ENCODE measurements at regions of chr1 and their contacts with region 1.

Region 1: GRCh38 chr1:180178511-180179161 is 24.0 kb downstream of the QSOX1 start:
- DNase-seq: peak; percentile 68
- H3K4me3 ChIP-seq: no peak overlapping the region
- H3K27ac ChIP-seq: no peak overlapping the region
- H3K4me1 ChIP-seq: peaks cover 2 to 9% (median 6%) of the 10 kb centered on the region in 4 donors
- H3K27me3 ChIP-seq: no peaks in the 10 kb centered on the region
- CTCF ChIP-seq: peak; percentile 89 to 98 (median 96)
- EP300 ChIP-seq: no peak
- POLR2A ChIP-seq: no peak

Region 2: DNA sequence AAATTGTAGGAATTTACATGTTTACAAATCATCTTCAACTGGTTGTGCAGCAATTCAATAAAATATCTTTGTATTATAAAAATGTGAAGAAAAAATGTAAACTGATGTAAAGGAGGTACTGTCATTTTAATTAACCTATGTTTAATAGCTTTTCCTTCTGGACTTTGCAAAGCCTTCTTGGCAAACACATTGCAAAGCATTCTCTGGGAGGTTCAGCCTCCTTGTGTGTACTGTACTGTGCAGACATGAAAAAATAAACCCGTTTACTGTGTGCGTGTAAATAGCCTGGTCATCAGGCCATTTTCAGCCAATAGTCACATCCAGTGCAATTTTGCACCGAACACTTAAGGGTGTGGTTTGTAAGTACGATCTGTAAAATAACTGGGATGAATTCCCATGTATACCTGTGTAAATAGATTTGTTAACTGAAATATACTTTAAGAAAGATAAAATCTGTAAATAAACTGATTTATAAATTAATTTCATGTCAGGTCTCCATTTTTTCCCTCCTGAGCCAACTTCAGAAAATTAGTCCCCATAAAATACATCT is 64.2 kb before region 1 on chr1:
- in situ Hi-C with region 1: no loop called
- intact Hi-C with region 1: loop called (anchors 2 kb)
- DNase-seq: no peak
- H3K4me3 ChIP-seq: no peak overlapping the region
- H3K27ac ChIP-seq: peak overlapping the region in 3 of 4 donors; percentile 36 to 62 (median 55)
- H3K4me1 ChIP-seq: peaks cover 0 to 22% (median 10%) of the 10 kb centered on the region in 4 donors
- H3K27me3 ChIP-seq: no peaks in the 10 kb centered on the region
- CTCF ChIP-seq: no peak
- EP300 ChIP-seq: no peak
- POLR2A ChIP-seq: no peak